ENCODE measurements at regions of chr16 and their contacts with region 1.

Region 1: DNA sequence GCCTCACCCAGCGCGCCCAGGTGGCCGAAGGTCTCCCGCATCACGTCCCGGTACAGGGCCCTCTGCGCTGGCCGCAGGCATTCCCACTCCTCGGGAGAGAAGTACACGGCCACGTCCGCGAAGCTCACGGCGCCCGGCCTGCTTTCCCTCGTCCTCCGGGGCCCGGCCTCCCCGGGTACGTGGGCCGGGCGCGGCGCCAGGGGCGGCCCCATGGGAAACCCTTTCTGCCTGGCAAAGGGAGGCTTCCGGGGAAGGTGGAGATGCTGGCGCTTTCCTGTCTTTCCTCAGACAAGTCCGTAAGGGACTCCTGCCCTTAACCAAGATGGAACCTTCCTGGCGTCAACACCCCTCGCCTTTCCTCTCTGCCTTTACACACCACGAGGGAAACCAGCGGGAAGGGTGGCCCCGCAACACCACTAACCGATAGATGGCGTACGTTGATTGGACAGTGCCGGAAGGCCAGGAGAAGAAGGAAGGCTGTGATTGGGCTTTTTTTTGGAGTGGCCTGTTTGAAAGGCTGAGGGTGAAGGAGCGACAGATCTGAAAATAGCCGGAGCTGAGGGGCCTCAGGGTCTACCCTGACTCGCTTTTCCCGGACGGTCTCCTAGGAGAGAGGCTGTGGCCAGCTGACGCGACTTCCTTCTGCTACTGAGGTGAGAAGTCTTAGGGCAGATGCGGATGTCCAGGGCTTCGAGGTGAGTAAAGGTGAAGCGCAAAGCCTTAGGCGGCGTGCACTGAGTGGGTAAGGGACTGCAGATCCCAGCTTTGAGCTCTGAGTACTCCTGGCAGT is at the start of gene ZNF785:
- DNase-seq: peak; percentile 97 to 99
- H3K4me3 ChIP-seq: peak within 1 kb of the TSS; percentile 82 to 90
- H3K27ac ChIP-seq: peak within 1 kb of the TSS; percentile 92 to 93
- H3K4me1 ChIP-seq: peaks cover 0 to 16% of the 10 kb centered on the region in 2 donors
- H3K27me3 ChIP-seq: no peaks in the 10 kb centered on the region
- CTCF ChIP-seq: peak in 2 of 3 experiments; percentile 17 to 23
- total RNA-seq, gene ZNF785: 12.1 TPM

Region 2: GRCh38 chr16:30534368-30535105 is 51.1 kb before region 1 on chr16 and contains the start of gene ZNF747:
- intact Hi-C with region 1: loop called (anchors 1 kb)
- DNase-seq: peak; percentile 61 to 95
- H3K4me3 ChIP-seq: peak within 1 kb of the TSS; percentile 69 to 93
- H3K27ac ChIP-seq: peak within 1 kb of the TSS; percentile 86 to 96
- H3K4me1 ChIP-seq: peaks cover 11 to 12% of the 10 kb centered on the region in 2 donors
- H3K27me3 ChIP-seq: no peaks in the 10 kb centered on the region
- CTCF ChIP-seq: peak in 1 of 3 experiments; percentile 8
- total RNA-seq, gene ZNF747: 19.6 TPM

Region 3: GRCh38 chr16:30557957-30558788 is 27.4 kb before region 1 on chr16 and contains the start of gene ZNF764:
- intact Hi-C with region 1: loop called (anchors 1 kb)
- DNase-seq: peak; percentile 96 to 99
- H3K4me3 ChIP-seq: peak within 1 kb of the TSS; percentile 91
- H3K27ac ChIP-seq: peak within 1 kb of the TSS; percentile 92 to 94
- H3K4me1 ChIP-seq: peaks cover 9 to 10% of the 10 kb centered on the region in 2 donors
- H3K27me3 ChIP-seq: no peaks in the 10 kb centered on the region
- CTCF ChIP-seq: peak in 1 of 3 experiments; percentile 1
- total RNA-seq, gene ZNF764: 10.9 TPM

Region 4: GRCh38 chr16:30571695-30572600 is 13.6 kb before region 1 on chr16 and contains the start of gene ZNF688:
- intact Hi-C with region 1: loop called (anchors 1 kb)
- DNase-seq: peak; percentile 97 to 99
- H3K4me3 ChIP-seq: peak within 1 kb of the TSS; percentile 83 to 92
- H3K27ac ChIP-seq: peak within 1 kb of the TSS; percentile 96 to 99
- H3K4me1 ChIP-seq: peaks cover 13 to 21% of the 10 kb centered on the region in 2 donors
- H3K27me3 ChIP-seq: no peaks in the 10 kb centered on the region
- CTCF ChIP-seq: peak in 1 of 3 experiments; percentile 17
- total RNA-seq, gene ZNF688: 11.3 TPM

Region 5: DNA sequence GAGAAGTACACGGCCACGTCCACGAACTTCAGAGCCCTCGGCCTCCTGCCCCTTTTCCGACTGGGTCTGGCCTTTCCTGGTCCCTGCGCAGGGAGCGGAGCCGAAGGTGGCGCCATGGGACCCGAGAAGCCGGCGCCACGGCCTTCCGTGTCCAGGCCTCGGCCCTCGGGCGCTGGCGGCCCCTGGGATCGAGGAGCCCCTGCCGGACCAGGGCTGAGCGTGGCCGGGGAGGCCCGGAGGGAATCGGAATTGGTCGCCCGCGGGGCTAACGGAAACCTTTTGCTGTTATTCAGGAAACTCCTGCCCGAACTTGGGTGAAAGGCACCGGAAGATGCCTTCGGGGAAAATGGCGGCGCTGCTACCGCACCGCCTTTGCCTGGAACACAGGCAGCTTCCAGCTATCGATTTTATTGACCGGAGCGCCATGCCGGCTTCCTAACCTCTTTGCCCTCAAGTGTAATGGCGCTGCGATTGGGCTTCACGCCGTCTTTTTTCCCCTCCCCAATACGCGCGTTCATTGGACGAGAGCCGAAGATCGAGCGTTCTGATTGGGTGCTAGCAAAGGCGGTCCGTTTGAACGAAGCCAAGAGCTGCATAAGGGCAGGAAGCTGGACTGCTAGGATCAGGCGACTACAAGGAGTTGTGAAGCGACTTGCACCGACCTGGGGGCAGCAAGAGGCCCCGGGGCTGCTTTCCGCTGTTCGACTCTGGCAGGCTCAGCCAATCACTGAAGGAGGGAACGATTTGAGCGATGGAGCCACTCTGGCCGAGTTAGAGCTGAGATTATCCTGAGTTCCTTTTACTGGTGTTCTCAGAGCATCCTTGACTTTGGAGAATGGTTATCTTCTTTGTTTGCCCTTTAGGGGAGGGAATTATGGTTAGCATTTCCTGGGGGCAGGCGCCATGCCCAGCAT is 24.6 kb after region 1 on chr16 and contains the start of gene ZNF689:
- intact Hi-C with region 1: loop called (anchors 1 kb)
- DNase-seq: peak; percentile 73 to 97
- H3K4me3 ChIP-seq: peak within 1 kb of the TSS; percentile 81 to 88
- H3K27ac ChIP-seq: peak within 1 kb of the TSS; percentile 88 to 96
- H3K4me1 ChIP-seq: peaks cover 0 to 10% of the 10 kb centered on the region in 2 donors
- H3K27me3 ChIP-seq: no peaks in the 10 kb centered on the region
- CTCF ChIP-seq: peak in 1 of 3 experiments; percentile 5
- total RNA-seq, gene ZNF689: 7.0 TPM

Region 6: GRCh38 chr16:30650369-30651123 is 65.0 kb after region 1 on chr16 and contains the start of gene PRR14:
- intact Hi-C with region 1: loop called (anchors 1 kb)
- DNase-seq: peak; percentile 99 to 100
- H3K4me3 ChIP-seq: peak within 1 kb of the TSS; percentile 74 to 91
- H3K27ac ChIP-seq: peak within 1 kb of the TSS; percentile 95
- H3K4me1 ChIP-seq: peaks cover 6 to 18% of the 10 kb centered on the region in 2 donors
- H3K27me3 ChIP-seq: no peaks in the 10 kb centered on the region
- CTCF ChIP-seq: peak in 2 of 3 experiments; percentile 33 to 67
- total RNA-seq, gene PRR14: 124 TPM

Region 7: GRCh38 chr16:30820952-30821760 is 235.6 kb after region 1 on chr16:
- intact Hi-C with region 1: no loop called
- DNase-seq: no peak
- H3K4me3 ChIP-seq: no peak overlapping the region
- H3K27ac ChIP-seq: no peak overlapping the region
- H3K4me1 ChIP-seq: no peaks in the 10 kb centered on the region
- H3K27me3 ChIP-seq: no peaks in the 10 kb centered on the region
- CTCF ChIP-seq: no peak